Posterior vena cava (tissue), 2 donors: ENCODE measurements at regions of chr3 and their contacts with region 1.

Region 1: GRCh38 chr3:69755795-69756194 is 16.5 kb downstream of the MITF start:
- DNase-seq: no peak

Region 2: GRCh38 chr3:69659180-69659910 is 96.5 kb before region 1 on chr3:
- intact Hi-C with region 1: no loop called
- DNase-seq: no peak

Region 3: GRCh38 chr3:69869643-69870042 is 113.8 kb after region 1 on chr3:
- intact Hi-C with region 1: no loop called
- DNase-seq: no peak

Region 4: GRCh38 chr3:70933105-70933810 is 1177.5 kb after region 1 on chr3:
- intact Hi-C with region 1: loop called in 1 of 2 experiments (anchors 5 kb)
- DNase-seq: no peak